ENCODE measurements at regions of chr17 and their contacts with region 1.

Region 1: GRCh38 chr17:45060797-45061605 is at the start of gene NMT1:
- DNase-seq: peak; percentile 81 to 98 (median 98)
- ATAC-seq: peak; percentile 95
- H3K4me3 ChIP-seq: peak within 1 kb of the TSS; percentile 97
- H3K4me3 Mint-ChIP-seq: peak within 1 kb of the TSS; percentile 80 to 100 (median 98)
- H3K27ac ChIP-seq: peak within 1 kb of the TSS; percentile 87
- H3K27ac Mint-ChIP-seq: peak within 1 kb of the TSS; percentile 88 to 99 (median 97)
- H3K4me1 ChIP-seq: peaks cover 18 to 20% of the 10 kb centered on the region in 2 donors
- H3K4me1 Mint-ChIP-seq: peaks cover 26 to 66% (median 53%) of the 10 kb centered on the region in 7 donors
- H3K27me3 ChIP-seq: no peaks in the 10 kb centered on the region
- H3K27me3 Mint-ChIP-seq: no peaks in the 10 kb centered on the region
- total RNA-seq, gene NMT1: 59.5 to 136 (median 121) TPM

Region 2: GRCh38 chr17:44899069-44899782 is 161.8 kb before region 1 on chr17 and contains the start of gene EFTUD2:
- CTCF ChIA-PET with region 1: no interaction called
- POLR2A ChIA-PET with region 1: interaction called, 5 read pairs
- intact Hi-C with region 1: loop called in 1 of 2 experiments (anchors 1 kb)
- DNase-seq: peak; percentile 91 to 99 (median 96)
- ATAC-seq: peak; percentile 94
- H3K4me3 ChIP-seq: peak within 1 kb of the TSS; percentile 89
- H3K4me3 Mint-ChIP-seq: peak within 1 kb of the TSS; percentile 84 to 97 (median 96)
- H3K27ac ChIP-seq: peak within 1 kb of the TSS; percentile 96
- H3K27ac Mint-ChIP-seq: peak within 1 kb of the TSS; percentile 99 to 100 (median 99)
- H3K4me1 ChIP-seq: peaks cover 6 to 10% of the 10 kb centered on the region in 2 donors
- H3K4me1 Mint-ChIP-seq: peaks cover 26 to 41% (median 35%) of the 10 kb centered on the region in 7 donors
- H3K27me3 ChIP-seq: no peaks in the 10 kb centered on the region
- H3K27me3 Mint-ChIP-seq: peaks cover 0 to 23% (median 0%) of the 10 kb centered on the region in 5 donors
- total RNA-seq, gene EFTUD2: 94.3 to 157 (median 120) TPM

Region 3: DNA sequence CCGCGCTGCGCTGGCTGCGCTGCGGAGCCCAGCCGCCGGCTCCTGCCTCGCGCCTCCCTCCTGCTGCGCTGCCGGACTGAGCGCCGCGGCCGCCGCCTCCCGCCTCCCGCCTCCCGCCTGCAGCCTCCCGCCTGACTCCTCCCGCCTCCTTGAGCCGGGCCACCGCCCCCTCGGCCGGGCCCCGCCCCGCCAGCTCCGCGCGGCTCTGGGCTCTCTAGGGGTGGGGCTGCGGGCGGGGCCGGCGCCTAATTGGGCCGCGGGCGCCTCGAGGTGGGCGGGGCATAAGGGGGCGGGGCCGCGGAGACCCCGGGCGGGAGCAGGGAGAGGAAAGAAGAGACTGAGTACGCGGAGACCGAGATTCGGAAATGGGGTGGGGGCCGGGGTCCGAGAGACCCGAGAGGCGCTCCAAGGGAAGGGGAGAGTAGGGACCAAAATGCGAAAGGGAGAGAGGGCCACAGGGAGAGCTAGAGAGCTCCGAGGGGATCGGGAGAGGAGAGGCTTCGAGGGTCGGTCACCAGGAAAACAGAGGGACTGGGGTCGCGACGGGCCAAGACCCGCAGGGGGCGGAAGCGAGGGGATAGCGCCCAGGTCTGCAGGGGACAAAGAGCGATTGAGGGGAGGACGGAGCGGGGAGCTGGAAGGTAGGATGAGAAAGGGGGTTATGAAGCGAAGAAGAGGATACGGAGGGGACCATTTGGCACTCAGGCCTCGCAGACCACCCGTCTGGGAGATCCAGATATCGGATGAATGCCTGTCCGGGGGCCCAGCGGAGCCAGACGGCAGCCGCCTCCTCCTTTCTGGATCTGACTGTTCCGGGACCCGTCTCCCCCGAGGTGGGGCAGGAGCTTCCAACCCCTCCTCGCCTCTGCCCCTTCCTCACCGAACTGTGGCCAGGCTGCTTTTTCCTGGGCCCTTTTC is 92.5 kb before region 1 on chr17 and contains the start of gene C1QL1:
- CTCF ChIA-PET with region 1: no interaction called
- POLR2A ChIA-PET with region 1: no interaction called
- intact Hi-C with region 1: loop called in 1 of 2 experiments (anchors 1 kb)
- DNase-seq: peak; percentile 58 to 93 (median 69)
- ATAC-seq: peak; percentile 99
- H3K4me3 ChIP-seq: peak within 1 kb of the TSS; percentile 33
- H3K4me3 Mint-ChIP-seq: peak within 1 kb of the TSS; percentile 64 to 87 (median 78)
- H3K27ac ChIP-seq: no peak within 1 kb of the TSS
- H3K27ac Mint-ChIP-seq: peak within 1 kb of the TSS in 2 of 9 donors; percentile 16 to 55
- H3K4me1 ChIP-seq: peaks cover 19 to 24% of the 10 kb centered on the region in 2 donors
- H3K4me1 Mint-ChIP-seq: peaks cover 23 to 40% (median 29%) of the 10 kb centered on the region in 7 donors
- H3K27me3 ChIP-seq: peaks cover 14 to 21% of the 10 kb centered on the region in 2 donors
- H3K27me3 Mint-ChIP-seq: peaks cover 30 to 84% (median 45%) of the 10 kb centered on the region in 5 donors
- total RNA-seq, gene C1QL1: 0.29 TPM in 1 of 5 experiments, not detected in the others

Region 4: GRCh38 chr17:45038728-45039634 is 22.0 kb before region 1 on chr17:
- CTCF ChIA-PET with region 1: no interaction called
- POLR2A ChIA-PET with region 1: no interaction called
- intact Hi-C with region 1: no loop called
- DNase-seq: no peak
- ATAC-seq: no peak
- H3K4me3 ChIP-seq: no peak overlapping the region
- H3K4me3 Mint-ChIP-seq: no peak overlapping the region
- H3K27ac ChIP-seq: no peak overlapping the region
- H3K27ac Mint-ChIP-seq: peak overlapping the region in 2 of 9 donors; percentile 15 to 59
- H3K4me1 ChIP-seq: no peaks in the 10 kb centered on the region
- H3K4me1 Mint-ChIP-seq: peaks cover 17 to 38% (median 25%) of the 10 kb centered on the region in 7 donors
- H3K27me3 ChIP-seq: no peaks in the 10 kb centered on the region
- H3K27me3 Mint-ChIP-seq: no peaks in the 10 kb centered on the region

Region 5: GRCh38 chr17:45098869-45099616 is 38.0 kb after region 1 on chr17:
- CTCF ChIA-PET with region 1: no interaction called
- POLR2A ChIA-PET with region 1: no interaction called
- intact Hi-C with region 1: loop called in 1 of 2 experiments (anchors 5 kb)
- DNase-seq: peak; percentile 38 to 77 (median 66)
- ATAC-seq: peak; percentile 89
- H3K4me3 ChIP-seq: no peak overlapping the region
- H3K4me3 Mint-ChIP-seq: no peak overlapping the region
- H3K27ac ChIP-seq: no peak overlapping the region
- H3K27ac Mint-ChIP-seq: peak overlapping the region in 6 of 9 donors; percentile 4 to 87 (median 62)
- H3K4me1 ChIP-seq: no peaks in the 10 kb centered on the region
- H3K4me1 Mint-ChIP-seq: peaks cover 0 to 6% (median 0%) of the 10 kb centered on the region in 7 donors
- H3K27me3 ChIP-seq: no peaks in the 10 kb centered on the region
- H3K27me3 Mint-ChIP-seq: no peaks in the 10 kb centered on the region

Region 6: GRCh38 chr17:45228763-45229539 is 167.9 kb after region 1 on chr17:
- CTCF ChIA-PET with region 1: no interaction called
- POLR2A ChIA-PET with region 1: interaction called, 3 read pairs
- intact Hi-C with region 1: loop called (anchors 1 to 5 kb)
- DNase-seq: peak; percentile 64 to 92 (median 74)
- ATAC-seq: peak; percentile 66
- H3K4me3 ChIP-seq: peak overlapping the region; percentile 91
- H3K4me3 Mint-ChIP-seq: peak overlapping the region; percentile 83 to 99 (median 96)
- H3K27ac ChIP-seq: peak overlapping the region; percentile 96
- H3K27ac Mint-ChIP-seq: peak overlapping the region; percentile 96 to 100 (median 99)
- H3K4me1 ChIP-seq: peaks cover 62 to 77% of the 10 kb centered on the region in 2 donors
- H3K4me1 Mint-ChIP-seq: peaks cover 54 to 91% (median 77%) of the 10 kb centered on the region in 7 donors
- H3K27me3 ChIP-seq: no peaks in the 10 kb centered on the region
- H3K27me3 Mint-ChIP-seq: no peaks in the 10 kb centered on the region

Measured in naive thymus-derived CD4-positive, alpha-beta T cell (primary cell).